Mammary epithelial cell (primary cell): ENCODE measurements at regions of chr17 and their contacts with region 1.

Region 1: GRCh38 chr17:50200457-50201275 is 765 bp downstream of the COL1A1 start:
- DNase-seq: peak; percentile 80
- H3K4me3 ChIP-seq: peak overlapping the region; percentile 49 to 62 (median 61)
- H3K27ac ChIP-seq: peak overlapping the region; percentile 49
- H3K4me1 ChIP-seq: peaks cover 20% of the 10 kb centered on the region
- H3K27me3 ChIP-seq: no peaks in the 10 kb centered on the region
- CTCF ChIP-seq: peak; percentile 69 to 95

Region 2: GRCh38 chr17:50117202-50118051 is 83.2 kb before region 1 on chr17:
- CTCF ChIA-PET with region 1: no interaction called
- dilution Hi-C with region 1: no loop called
- in situ Hi-C with region 1: no loop called
- intact Hi-C with region 1: no loop called
- DNase-seq: peak; percentile 42
- H3K4me3 ChIP-seq: no peak overlapping the region
- H3K27ac ChIP-seq: no peak overlapping the region
- H3K4me1 ChIP-seq: peaks cover 6% of the 10 kb centered on the region
- H3K27me3 ChIP-seq: no peaks in the 10 kb centered on the region
- CTCF ChIP-seq: peak; percentile 45 to 63

Region 3: GRCh38 chr17:50139950-50140871 is 60.5 kb before region 1 on chr17:
- CTCF ChIA-PET with region 1: no interaction called
- dilution Hi-C with region 1: no loop called
- in situ Hi-C with region 1: no loop called
- intact Hi-C with region 1: loop called (anchors 2 kb)
- DNase-seq: peak; percentile 57
- H3K4me3 ChIP-seq: no peak overlapping the region
- H3K27ac ChIP-seq: no peak overlapping the region
- H3K4me1 ChIP-seq: no peaks in the 10 kb centered on the region
- H3K27me3 ChIP-seq: no peaks in the 10 kb centered on the region
- CTCF ChIP-seq: peak; percentile 82 to 86

Region 4: GRCh38 chr17:50269477-50270434 is 69.1 kb after region 1 on chr17:
- CTCF ChIA-PET with region 1: interaction called, 7 read pairs
- dilution Hi-C with region 1: loop called (anchors 5 kb)
- in situ Hi-C with region 1: loop called in 1 of 2 experiments (anchors 5 kb)
- intact Hi-C with region 1: loop called (anchors 1 kb)
- DNase-seq: peak; percentile 41
- H3K4me3 ChIP-seq: no peak overlapping the region
- H3K27ac ChIP-seq: no peak overlapping the region
- H3K4me1 ChIP-seq: peaks cover 24% of the 10 kb centered on the region
- H3K27me3 ChIP-seq: no peaks in the 10 kb centered on the region
- CTCF ChIP-seq: peak; percentile 82 to 99

Region 5: GRCh38 chr17:50297407-50297865 is 96.8 kb after region 1 on chr17:
- CTCF ChIA-PET with region 1: interaction called, 3 read pairs
- dilution Hi-C with region 1: loop called (anchors 5 kb)
- in situ Hi-C with region 1: loop called in 1 of 2 experiments (anchors 5 kb)
- intact Hi-C with region 1: loop called (anchors 1 kb)
- DNase-seq: no peak
- H3K4me3 ChIP-seq: no peak overlapping the region
- H3K27ac ChIP-seq: no peak overlapping the region
- H3K4me1 ChIP-seq: no peaks in the 10 kb centered on the region
- H3K27me3 ChIP-seq: no peaks in the 10 kb centered on the region
- CTCF ChIP-seq: peak; percentile 82 to 93

Region 6: GRCh38 chr17:50397111-50397918 is 196.6 kb after region 1 on chr17 and contains the start of gene LRRC59:
- CTCF ChIA-PET with region 1: no interaction called
- dilution Hi-C with region 1: no loop called
- in situ Hi-C with region 1: no loop called
- intact Hi-C with region 1: loop called (anchors 1 kb)
- DNase-seq: peak; percentile 71
- H3K4me3 ChIP-seq: peak within 1 kb of the TSS; percentile 59 to 86 (median 61)
- H3K27ac ChIP-seq: peak within 1 kb of the TSS; percentile 78
- H3K4me1 ChIP-seq: peaks cover 19% of the 10 kb centered on the region
- H3K27me3 ChIP-seq: no peaks in the 10 kb centered on the region
- CTCF ChIP-seq: peak; percentile 93 to 95
- total RNA-seq, gene LRRC59: 118 to 190 TPM